Calu3 (cell line): ENCODE measurements at regions of chr7 and their contacts with region 1.

Region 1: DNA sequence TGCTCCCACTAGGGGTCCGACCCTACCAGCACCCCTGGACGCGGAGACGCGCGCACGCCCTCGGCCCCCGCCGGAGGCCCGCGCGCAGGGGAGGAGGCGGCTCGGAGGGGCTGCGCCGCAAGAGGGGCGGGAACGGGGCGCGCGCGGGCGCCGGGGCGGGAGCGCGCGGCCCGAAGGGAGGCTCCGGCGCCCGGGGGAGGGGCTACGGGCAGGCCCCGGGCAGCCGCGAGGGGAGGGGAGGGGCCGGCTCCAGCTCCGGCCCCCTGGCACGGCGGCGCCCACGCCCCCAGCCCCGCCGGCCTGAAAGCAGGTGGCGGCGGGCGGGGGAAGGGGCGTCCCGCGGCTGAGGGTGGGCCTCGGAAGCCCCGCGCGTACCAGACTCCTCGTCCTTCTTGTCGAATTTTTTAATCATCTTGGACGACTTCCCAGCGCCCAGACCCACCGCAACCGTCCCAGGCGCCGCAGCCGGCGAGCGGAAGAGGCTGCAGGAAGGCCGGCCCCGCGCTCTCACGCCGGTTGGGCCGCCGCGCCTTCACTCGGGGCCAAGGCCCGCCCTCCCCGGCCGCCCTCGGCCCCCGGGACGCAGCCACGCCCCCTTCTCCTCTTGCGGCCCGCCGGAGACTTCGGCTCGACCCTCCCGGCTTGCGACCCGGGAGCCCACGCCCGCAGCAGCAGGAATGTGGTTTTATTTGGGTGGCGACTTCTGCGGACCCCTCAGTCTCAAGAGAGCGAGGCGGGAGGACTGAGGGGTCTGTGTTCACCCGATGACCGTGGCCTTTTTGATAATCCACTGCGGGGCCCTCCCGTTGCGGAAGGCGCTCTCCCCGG is at the start of gene COPG2:
- DNase-seq: peak; percentile 90
- H3K4me3 Mint-ChIP-seq: peak within 1 kb of the TSS; percentile 84
- H3K27ac Mint-ChIP-seq: no peak within 1 kb of the TSS
- H3K4me1 Mint-ChIP-seq: peaks cover 9% of the 10 kb centered on the region
- H3K27me3 Mint-ChIP-seq: peaks cover 12% of the 10 kb centered on the region
- CTCF ChIP-seq: no peak
- total RNA-seq, gene COPG2: 18.2 and 19.8 TPM in 2 replicates

Region 2: DNA sequence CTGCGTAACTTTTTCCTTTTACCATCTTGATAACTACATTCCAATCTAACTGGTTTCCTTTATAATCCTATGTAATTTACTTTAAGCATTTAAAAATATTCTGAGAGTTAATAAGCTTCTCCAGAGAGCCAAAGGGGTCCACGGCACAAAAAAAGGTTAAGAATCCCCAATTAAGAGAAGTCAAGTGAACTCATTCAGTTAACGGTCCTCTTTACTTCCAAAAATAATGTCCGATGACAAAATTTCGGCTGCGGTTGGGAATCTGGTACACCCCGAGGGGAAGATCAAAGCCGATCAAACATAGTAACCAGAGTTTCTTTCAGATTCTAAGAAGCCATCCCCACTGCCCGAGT is 617.7 kb before region 1 on chr7:
- CTCF ChIA-PET with region 1: no interaction called
- intact Hi-C with region 1: loop called (anchors 5 kb)
- DNase-seq: no peak
- H3K4me3 Mint-ChIP-seq: peak overlapping the region; percentile 98
- H3K27ac Mint-ChIP-seq: peak overlapping the region; percentile 98
- H3K4me1 Mint-ChIP-seq: peaks cover 6% of the 10 kb centered on the region
- H3K27me3 Mint-ChIP-seq: no peaks in the 10 kb centered on the region
- CTCF ChIP-seq: no peak